WTC11 (cell line): ENCODE measurements at regions of chr20 and their contacts with region 1.

Region 1: DNA sequence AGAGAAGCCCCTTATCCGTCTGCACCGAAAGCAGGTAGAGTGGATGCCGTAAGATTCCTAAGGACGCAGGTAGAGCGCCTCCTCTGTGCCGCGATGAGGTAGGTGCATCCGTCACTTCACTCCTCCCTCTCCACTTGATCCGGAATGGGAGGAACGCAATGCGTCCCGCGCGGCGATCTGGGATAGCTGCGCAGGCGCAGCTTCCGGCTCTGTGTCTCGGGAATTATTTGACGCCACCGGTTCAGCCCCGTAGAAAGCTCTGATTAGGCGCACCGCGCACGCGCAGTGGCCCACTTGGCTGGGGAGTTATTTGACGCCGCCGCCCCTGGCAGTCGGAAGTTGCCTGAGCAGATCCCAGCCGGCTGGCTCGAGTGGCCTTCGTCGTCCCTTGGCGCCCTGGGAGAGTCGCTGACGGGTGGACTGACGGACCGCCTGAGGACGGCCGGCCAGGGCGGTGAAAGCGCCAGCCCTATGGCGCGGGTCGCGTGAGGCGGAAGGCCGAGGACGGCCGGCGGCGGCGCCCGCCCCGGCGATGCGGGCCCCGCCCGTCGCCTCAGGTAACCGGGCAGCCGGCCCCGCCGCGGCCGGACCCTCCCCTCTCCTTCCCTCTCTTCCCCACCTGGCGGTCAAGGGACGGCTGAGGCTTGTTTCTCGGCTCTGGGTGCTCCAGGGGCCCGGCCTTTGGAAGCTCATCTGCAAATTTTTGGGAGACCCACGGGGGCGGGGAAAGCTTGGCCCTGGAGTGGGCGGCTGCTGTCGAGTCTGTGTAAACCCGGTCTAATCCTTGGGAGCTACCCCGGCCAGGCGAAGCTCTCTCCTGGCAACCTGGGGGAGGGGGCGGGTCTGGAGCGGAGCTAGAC is at the start of gene RALGAPB:
- DNase-seq: peak; percentile 99
- ATAC-seq: peak; percentile 97
- H3K4me3 Mint-ChIP-seq: peak within 1 kb of the TSS; percentile 89
- H3K27ac Mint-ChIP-seq: peak within 1 kb of the TSS; percentile 99
- H3K4me1 Mint-ChIP-seq: peaks cover 20% of the 10 kb centered on the region
- H3K27me3 Mint-ChIP-seq: no peaks in the 10 kb centered on the region; the same call in 1 of the 2 replicates
- CTCF ChIP-seq: no peak
- total RNA-seq, gene RALGAPB: 29.4 to 36.7 TPM (median 31.4 TPM) in 3 replicates

Region 2: GRCh38 chr20:38434743-38435554 is 37.8 kb before region 1 on chr20 and contains the start of gene SNHG17:
- CTCF ChIA-PET with region 1: interaction called, 29 read pairs
- POLR2A ChIA-PET with region 1: interaction called, 19 read pairs
- DNase-seq: peak; percentile 88
- ATAC-seq: peak; percentile 78
- H3K4me3 Mint-ChIP-seq: peak within 1 kb of the TSS; percentile 95
- H3K27ac Mint-ChIP-seq: peak within 1 kb of the TSS; percentile 94
- H3K4me1 Mint-ChIP-seq: peaks cover 24% of the 10 kb centered on the region
- H3K27me3 Mint-ChIP-seq: peaks cover 3% of the 10 kb centered on the region; the same call in 1 of the 2 replicates
- CTCF ChIP-seq: peak; percentile 97
- total RNA-seq, gene SNHG17: 52.0 to 71.6 TPM (median 57.4 TPM) in 3 replicates

Region 3: GRCh38 chr20:38446441-38447209 is 26.1 kb before region 1 on chr20:
- CTCF ChIA-PET with region 1: interaction called, 38 read pairs
- POLR2A ChIA-PET with region 1: interaction called, 8 read pairs
- DNase-seq: peak; percentile 94
- ATAC-seq: peak; percentile 95
- H3K4me3 Mint-ChIP-seq: peak overlapping the region; percentile 78
- H3K27ac Mint-ChIP-seq: no peak overlapping the region
- H3K4me1 Mint-ChIP-seq: peaks cover 15% of the 10 kb centered on the region
- H3K27me3 Mint-ChIP-seq: no peaks in the 10 kb centered on the region
- CTCF ChIP-seq: peak; percentile 86